Esophagus muscularis mucosa (tissue), 4 donors: ENCODE measurements at regions of chr18 and their contacts with region 1.

Region 1: DNA sequence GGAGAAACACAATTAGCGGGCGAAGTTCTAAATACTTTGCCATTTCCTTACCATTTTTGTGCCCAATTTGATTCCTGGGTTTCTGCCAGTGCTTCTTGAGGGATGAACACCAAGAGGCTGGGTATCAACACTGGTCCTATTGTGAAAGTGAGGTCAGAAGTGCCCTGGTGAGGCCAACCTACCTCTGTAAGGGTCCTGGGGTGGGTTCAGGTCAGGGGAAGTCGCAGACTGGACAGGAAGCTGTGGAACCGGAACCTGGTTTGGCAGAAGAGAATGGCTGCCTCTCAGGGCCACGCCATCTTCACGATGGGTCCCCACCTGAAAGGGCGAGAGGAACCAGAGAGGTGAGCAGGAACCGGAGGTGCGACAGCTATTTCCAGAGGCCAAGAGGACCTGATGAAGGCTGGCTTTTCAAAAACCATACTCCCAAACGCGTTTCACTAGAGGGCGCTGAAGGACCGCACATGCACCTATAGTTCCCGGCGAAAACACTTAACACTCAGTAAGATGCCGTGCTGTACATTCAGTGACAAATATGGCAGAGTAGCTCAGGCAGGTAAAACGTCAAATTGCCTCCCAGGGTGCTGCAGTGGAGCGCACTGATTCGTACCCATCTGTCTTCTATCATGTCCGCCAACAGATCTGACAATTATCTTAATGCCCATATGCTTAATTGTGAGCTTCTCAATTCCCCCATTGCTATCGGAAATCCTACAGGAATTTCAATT is 275.3 kb upstream of the CCDC68 start:
- DNase-seq: peak; percentile 94
- H3K4me3 ChIP-seq: peak overlapping the region in 1 of 4 donors; percentile 33
- H3K27ac ChIP-seq: peak overlapping the region in 3 of 4 donors; percentile 21 to 52 (median 40)
- H3K4me1 ChIP-seq: peaks cover 12 to 22% (median 18%) of the 10 kb centered on the region in 4 donors
- H3K27me3 ChIP-seq: no peaks in the 10 kb centered on the region
- CTCF ChIP-seq: peak; percentile 69 to 79 (median 74)
- EP300 ChIP-seq: no peak
- POLR2A ChIP-seq: no peak

Region 2: GRCh38 chr18:55322178-55322735 is 87.7 kb after region 1 on chr18:
- intact Hi-C with region 1: loop called (anchors 5 kb)
- DNase-seq: no peak
- H3K4me3 ChIP-seq: peak overlapping the region; percentile 60 to 77 (median 65)
- H3K27ac ChIP-seq: peak overlapping the region; percentile 88 to 94 (median 91)
- H3K4me1 ChIP-seq: peaks cover 24 to 48% (median 31%) of the 10 kb centered on the region in 4 donors
- H3K27me3 ChIP-seq: no peaks in the 10 kb centered on the region
- CTCF ChIP-seq: peak in 1 of 3 experiments; percentile 11
- EP300 ChIP-seq: no peak
- POLR2A ChIP-seq: no peak

Region 3: DNA sequence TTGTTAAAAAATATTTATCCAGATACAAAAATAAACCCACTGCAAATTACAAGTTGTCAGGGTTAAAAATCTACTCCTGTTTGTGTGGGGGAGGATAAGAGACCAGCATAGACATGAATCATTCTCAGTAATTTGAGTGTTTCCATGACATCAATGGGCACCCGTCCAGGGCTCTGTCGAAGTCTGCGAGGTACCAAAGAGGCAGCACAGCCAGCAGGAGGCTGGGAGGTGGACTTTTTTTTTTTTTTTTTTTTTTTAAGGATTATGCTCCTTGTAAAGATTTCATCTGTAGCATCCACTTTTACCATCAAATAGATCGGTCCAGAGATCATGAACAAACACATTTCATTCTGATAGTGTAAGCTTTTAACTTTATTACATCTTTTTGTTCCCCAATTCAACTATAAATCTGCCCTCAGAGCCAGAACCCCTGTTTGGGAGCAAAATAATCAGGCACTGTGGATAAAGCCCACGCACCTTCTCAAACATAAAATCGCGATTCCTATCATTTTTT is 171.4 kb after region 1 on chr18:
- intact Hi-C with region 1: loop called (anchors 5 kb)
- DNase-seq: no peak
- H3K4me3 ChIP-seq: no peak overlapping the region
- H3K27ac ChIP-seq: peak overlapping the region; percentile 40 to 78 (median 66)
- H3K4me1 ChIP-seq: peaks cover 15 to 41% (median 39%) of the 10 kb centered on the region in 4 donors
- H3K27me3 ChIP-seq: no peaks in the 10 kb centered on the region
- CTCF ChIP-seq: no peak
- EP300 ChIP-seq: no peak
- POLR2A ChIP-seq: no peak

Region 4: DNA sequence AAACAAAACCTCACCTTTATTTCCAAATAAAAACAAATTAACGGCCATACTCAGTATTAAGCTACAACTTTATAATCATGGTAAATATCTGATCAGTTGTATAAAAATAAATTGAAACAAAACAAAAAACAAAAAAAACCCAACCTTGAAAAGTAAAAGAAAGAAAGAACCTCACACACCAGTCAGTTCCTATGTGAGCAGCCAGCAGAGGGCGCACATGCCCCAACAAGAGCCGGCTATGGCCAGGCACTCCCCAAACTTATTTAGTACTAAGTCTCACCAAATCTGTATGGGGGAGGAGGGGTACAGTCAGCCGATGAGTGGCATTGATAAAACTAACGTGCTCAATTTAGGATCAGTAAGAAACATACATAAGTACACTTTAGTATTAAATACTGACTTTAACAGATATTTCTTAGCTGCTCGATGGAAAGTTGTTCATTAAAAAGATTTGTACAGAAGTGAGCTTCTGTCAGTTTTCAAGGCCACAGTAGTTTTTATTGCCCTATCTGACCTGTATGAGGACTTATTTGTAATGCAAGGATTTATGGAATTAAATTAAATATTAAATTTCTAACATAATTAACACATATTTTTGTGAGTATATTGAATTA is 180.8 kb after region 1 on chr18:
- intact Hi-C with region 1: loop called (anchors 5 kb)
- DNase-seq: peak; percentile 96
- H3K4me3 ChIP-seq: no peak overlapping the region
- H3K27ac ChIP-seq: no peak overlapping the region
- H3K4me1 ChIP-seq: peaks cover 0 to 30% (median 15%) of the 10 kb centered on the region in 4 donors
- H3K27me3 ChIP-seq: no peaks in the 10 kb centered on the region
- CTCF ChIP-seq: peak; percentile 70 to 95 (median 87)
- EP300 ChIP-seq: no peak
- POLR2A ChIP-seq: no peak

Region 5: GRCh38 chr18:55781481-55781957 is 547.0 kb after region 1 on chr18:
- intact Hi-C with region 1: loop called (anchors 10 kb)
- DNase-seq: no peak
- H3K4me3 ChIP-seq: no peak overlapping the region
- H3K27ac ChIP-seq: no peak overlapping the region
- H3K4me1 ChIP-seq: peaks cover 4 to 20% (median 18%) of the 10 kb centered on the region in 4 donors
- H3K27me3 ChIP-seq: peaks cover 0 to 25% (median 0%) of the 10 kb centered on the region in 4 donors
- CTCF ChIP-seq: peak; percentile 40 to 56 (median 41)
- EP300 ChIP-seq: no peak
- POLR2A ChIP-seq: no peak

Region 6: DNA sequence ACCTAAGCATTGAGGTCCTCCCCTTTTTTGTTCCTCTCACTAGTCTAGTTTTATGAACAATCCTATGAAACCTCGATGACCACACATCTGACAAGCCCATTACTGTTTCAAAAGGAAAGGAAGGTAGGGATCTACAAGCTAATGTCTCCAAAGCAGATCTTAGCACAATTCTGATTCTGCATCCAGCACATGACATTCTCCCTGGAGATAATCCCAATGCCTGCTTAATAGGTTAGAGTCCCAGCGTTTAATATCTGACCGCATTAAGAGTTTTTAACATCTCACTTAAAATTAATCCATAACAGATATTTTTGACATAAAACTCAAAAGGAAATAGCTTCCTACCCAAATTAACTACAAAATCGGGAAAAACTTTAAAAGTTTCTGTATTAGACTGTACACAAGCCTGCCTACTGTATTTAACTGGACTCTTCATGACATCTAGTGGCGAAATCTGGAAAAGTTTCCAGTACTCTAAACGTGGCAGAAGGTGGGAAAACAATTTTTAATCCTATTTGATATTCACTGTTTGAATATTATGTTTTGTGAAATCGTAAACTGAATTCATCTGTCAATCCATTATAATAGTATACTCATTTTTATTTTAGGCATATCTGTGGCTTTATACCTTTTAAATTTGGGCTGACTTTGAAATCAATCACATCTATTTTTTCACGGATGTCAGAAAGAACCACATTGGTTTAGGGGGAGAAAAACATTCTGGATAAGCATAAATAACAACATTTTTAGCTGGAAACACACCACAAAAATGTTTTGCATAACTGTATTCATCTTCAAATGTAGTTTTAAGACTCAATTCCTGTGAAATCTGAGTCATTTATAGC is 1341.5 kb after region 1 on chr18:
- intact Hi-C with region 1: loop called (anchors 5 kb)
- DNase-seq: no peak
- H3K4me3 ChIP-seq: no peak overlapping the region
- H3K27ac ChIP-seq: peak overlapping the region in 1 of 4 donors; percentile 45
- H3K4me1 ChIP-seq: peaks cover 17 to 28% (median 21%) of the 10 kb centered on the region in 4 donors
- H3K27me3 ChIP-seq: no peaks in the 10 kb centered on the region
- CTCF ChIP-seq: peak; percentile 71 to 77 (median 73)
- EP300 ChIP-seq: no peak
- POLR2A ChIP-seq: no peak